PC-9 (cell line): ENCODE measurements at regions of chr10 and their contacts with region 1.

Region 1: DNA sequence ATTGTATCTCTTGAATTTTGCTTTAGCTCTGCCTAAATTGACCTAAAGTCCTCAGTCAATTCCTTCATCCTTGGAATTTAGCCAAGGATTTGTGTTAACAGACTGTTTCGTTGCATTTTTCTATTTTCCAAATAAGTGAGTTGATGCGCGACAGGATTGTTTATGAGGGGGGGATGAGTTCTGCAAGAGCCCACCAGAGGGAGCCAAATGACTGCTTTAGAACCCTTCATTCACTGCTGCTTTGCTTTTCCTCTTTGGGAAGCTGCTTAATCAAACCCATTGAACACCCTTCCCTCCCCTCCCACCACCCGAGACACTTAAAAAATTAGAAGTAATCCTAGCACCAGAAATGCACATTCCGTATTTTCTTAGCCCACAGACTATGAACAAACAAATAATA is 33.7 kb upstream of the PTF1A start:
- DNase-seq: peak in 1 of 2 experiments; percentile 37
- H3K4me3 ChIP-seq: no peak overlapping the region
- H3K27ac ChIP-seq: no peak overlapping the region
- H3K4me1 ChIP-seq: no peaks in the 10 kb centered on the region
- H3K27me3 ChIP-seq: no peaks in the 10 kb centered on the region
- CTCF ChIP-seq: peak; percentile 87

Region 2: DNA sequence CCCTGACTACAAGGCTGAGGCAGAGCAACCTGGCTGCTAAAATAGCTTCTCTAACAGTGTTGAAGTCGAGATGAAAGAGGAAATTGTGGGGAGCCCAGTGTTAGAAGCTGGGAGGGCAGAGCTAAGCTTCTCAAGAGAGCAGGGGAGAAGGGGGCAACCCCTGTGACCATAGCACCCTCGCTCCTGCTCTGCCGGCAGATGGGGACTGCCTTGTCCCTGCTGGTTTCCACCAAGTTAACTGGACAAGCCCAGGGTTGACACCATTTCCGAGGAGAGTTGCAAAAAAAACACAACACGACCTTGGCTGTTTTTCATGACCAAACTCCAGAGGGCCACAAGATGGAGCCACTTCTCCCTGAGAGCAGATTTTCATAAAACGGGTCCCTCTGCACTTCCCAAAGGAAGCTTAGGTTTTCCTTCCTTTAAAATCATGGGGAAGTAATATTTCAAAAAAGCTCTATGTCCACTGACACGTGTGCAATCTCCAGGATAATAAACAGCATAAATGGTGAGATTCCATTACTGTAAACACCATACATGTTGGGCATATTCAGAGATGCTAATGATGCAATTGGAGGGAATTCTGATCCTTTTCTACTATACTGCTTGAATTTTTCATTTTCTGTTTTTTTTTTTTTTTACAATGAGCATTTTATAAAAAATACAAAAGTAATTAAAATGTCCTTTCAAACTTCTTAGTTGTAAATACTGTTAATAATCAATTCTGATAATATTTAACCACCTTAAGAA is 584.4 kb before region 1 on chr10:
- CTCF ChIA-PET with region 1: no interaction called
- POLR2A ChIA-PET with region 1: no interaction called
- intact Hi-C with region 1: no loop called
- DNase-seq: no peak
- H3K4me3 ChIP-seq: no peak overlapping the region
- H3K27ac ChIP-seq: no peak overlapping the region
- H3K4me1 ChIP-seq: no peaks in the 10 kb centered on the region
- H3K27me3 ChIP-seq: no peaks in the 10 kb centered on the region
- CTCF ChIP-seq: peak; percentile 59

Region 3: GRCh38 chr10:23204773-23205172 is 46.4 kb after region 1 on chr10:
- CTCF ChIA-PET with region 1: no interaction called
- POLR2A ChIA-PET with region 1: no interaction called
- intact Hi-C with region 1: no loop called
- DNase-seq: no peak
- H3K4me3 ChIP-seq: no peak overlapping the region
- H3K27ac ChIP-seq: no peak overlapping the region
- H3K4me1 ChIP-seq: no peaks in the 10 kb centered on the region
- H3K27me3 ChIP-seq: peaks cover 25% of the 10 kb centered on the region; the same call in 1 of the 2 replicates
- CTCF ChIP-seq: no peak

Region 4: DNA sequence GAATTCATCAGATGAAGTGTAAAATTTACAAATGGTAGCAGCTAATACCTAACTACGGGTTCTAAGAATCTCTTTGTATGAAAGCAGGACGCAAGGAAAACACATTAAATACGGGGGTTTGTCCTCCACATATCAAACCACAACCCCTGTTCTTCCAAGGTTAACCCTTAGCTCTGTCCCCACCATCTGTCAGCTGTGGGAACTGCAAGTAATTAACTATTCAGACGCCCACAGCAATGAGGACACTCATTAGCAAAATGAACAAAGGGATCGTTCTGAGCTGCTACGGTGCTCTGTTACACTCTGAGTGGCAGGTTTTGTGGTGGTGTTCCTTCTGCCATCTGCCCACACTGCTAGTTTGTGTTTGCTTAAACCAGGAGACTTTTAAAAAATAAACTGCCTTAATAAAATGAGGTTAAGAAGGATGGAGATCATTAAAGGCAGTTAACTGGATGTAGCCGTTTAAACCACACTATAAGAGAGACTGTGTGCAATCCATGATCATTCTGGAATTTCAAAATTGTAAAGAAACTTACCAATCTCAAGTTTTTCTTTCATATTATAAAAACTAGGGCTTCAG is 134.9 kb after region 1 on chr10:
- CTCF ChIA-PET with region 1: interaction called, 3 read pairs
- POLR2A ChIA-PET with region 1: no interaction called
- intact Hi-C with region 1: loop called (anchors 1 kb)
- DNase-seq: no peak
- H3K4me3 ChIP-seq: no peak overlapping the region
- H3K27ac ChIP-seq: no peak overlapping the region
- H3K4me1 ChIP-seq: no peaks in the 10 kb centered on the region
- H3K27me3 ChIP-seq: no peaks in the 10 kb centered on the region
- CTCF ChIP-seq: peak; percentile 59

Region 5: DNA sequence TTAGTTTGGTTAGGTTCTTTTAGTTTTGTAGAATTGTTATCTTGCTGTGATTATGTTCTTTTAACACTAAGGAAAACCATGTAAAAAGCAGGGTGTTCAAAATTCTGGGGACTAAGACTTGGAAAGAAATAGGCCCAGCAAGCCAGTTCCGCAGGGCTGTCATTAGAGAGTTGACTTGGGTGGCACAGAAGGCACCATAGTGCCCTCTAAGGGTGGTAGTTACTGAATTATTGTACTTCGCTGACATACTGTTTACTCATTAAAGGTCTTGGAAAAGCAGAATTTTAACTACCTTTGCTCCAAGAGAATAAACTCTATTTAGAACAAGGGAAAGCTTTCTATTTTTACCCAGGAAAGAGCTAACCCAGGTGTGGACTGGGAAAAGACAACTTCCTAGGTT is 367.0 kb after region 1 on chr10:
- CTCF ChIA-PET with region 1: no interaction called
- POLR2A ChIA-PET with region 1: no interaction called
- intact Hi-C with region 1: loop called (anchors 5 kb)
- DNase-seq: peak in 1 of 2 experiments; percentile 19
- H3K4me3 ChIP-seq: no peak overlapping the region
- H3K27ac ChIP-seq: no peak overlapping the region
- H3K4me1 ChIP-seq: peaks cover 10% of the 10 kb centered on the region; the same call in 1 of the 2 replicates
- H3K27me3 ChIP-seq: no peaks in the 10 kb centered on the region
- CTCF ChIP-seq: peak; percentile 60

Region 6: GRCh38 chr10:23702977-23703414 is 544.6 kb after region 1 on chr10:
- CTCF ChIA-PET with region 1: no interaction called
- POLR2A ChIA-PET with region 1: no interaction called
- intact Hi-C with region 1: loop called (anchors 1 kb)
- DNase-seq: peak; percentile 38 to 50
- H3K4me3 ChIP-seq: no peak overlapping the region
- H3K27ac ChIP-seq: no peak overlapping the region
- H3K4me1 ChIP-seq: no peaks in the 10 kb centered on the region
- H3K27me3 ChIP-seq: no peaks in the 10 kb centered on the region; the same call in 1 of the 2 replicates
- CTCF ChIP-seq: peak; percentile 79

Region 7: GRCh38 chr10:24201503-24202180 is 1043.3 kb after region 1 on chr10:
- CTCF ChIA-PET with region 1: no interaction called
- POLR2A ChIA-PET with region 1: no interaction called
- intact Hi-C with region 1: loop called (anchors 5 kb)
- DNase-seq: no peak
- H3K4me3 ChIP-seq: no peak overlapping the region
- H3K27ac ChIP-seq: no peak overlapping the region
- H3K4me1 ChIP-seq: peaks cover 8% of the 10 kb centered on the region
- H3K27me3 ChIP-seq: no peaks in the 10 kb centered on the region
- CTCF ChIP-seq: no peak

Region 8: GRCh38 chr10:24518981-24519597 is 1360.7 kb after region 1 on chr10:
- CTCF ChIA-PET with region 1: no interaction called
- POLR2A ChIA-PET with region 1: no interaction called
- intact Hi-C with region 1: loop called (anchors 1 kb)
- DNase-seq: peak in 1 of 2 experiments; percentile 41
- H3K4me3 ChIP-seq: no peak overlapping the region
- H3K27ac ChIP-seq: no peak overlapping the region
- H3K4me1 ChIP-seq: no peaks in the 10 kb centered on the region
- H3K27me3 ChIP-seq: no peaks in the 10 kb centered on the region
- CTCF ChIP-seq: peak; percentile 82